CD8-positive, alpha-beta T cell (primary cell): ENCODE measurements at regions of chr20 and their contacts with region 1.

Region 1: DNA sequence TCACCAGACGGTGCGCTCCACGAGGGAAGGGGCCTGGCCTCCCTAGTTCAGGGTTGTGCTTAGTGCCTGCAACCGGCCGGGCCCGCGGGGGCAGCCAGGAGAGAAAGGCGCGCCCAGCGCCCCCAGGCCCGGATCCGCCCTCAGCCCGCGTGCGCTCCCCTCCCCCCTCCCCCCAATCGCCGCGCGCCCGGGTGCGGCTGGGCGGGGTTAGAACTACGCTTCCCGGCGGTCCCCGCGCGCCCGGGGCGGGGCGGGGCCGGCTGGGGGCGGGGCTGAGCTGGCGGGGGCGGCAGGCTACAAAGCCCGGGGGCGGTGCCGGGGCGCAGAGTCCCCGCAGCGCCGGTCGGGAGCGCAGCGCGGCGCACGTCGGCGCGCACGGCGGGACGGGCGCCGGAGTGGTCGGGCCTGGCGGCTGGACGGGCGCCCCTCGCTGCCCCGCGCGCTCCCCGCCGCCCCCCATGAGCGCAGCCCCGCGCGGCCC is at the start of gene RBM38:
- DNase-seq: peak; percentile 50 to 86 (median 74)
- ATAC-seq: peak; percentile 54
- H3K4me3 ChIP-seq: peak within 1 kb of the TSS; percentile 97 to 98
- H3K4me3 Mint-ChIP-seq: peak within 1 kb of the TSS; percentile 99
- H3K27ac ChIP-seq: peak within 1 kb of the TSS; percentile 90 to 97
- H3K27ac Mint-ChIP-seq: peak within 1 kb of the TSS; percentile 98
- H3K4me1 ChIP-seq: peaks cover 53% of the 10 kb centered on the region
- H3K4me1 Mint-ChIP-seq: peaks cover 45% of the 10 kb centered on the region
- H3K27me3 ChIP-seq: no peaks in the 10 kb centered on the region
- H3K27me3 Mint-ChIP-seq: no peaks in the 10 kb centered on the region
- CTCF ChIP-seq: no peak
- total RNA-seq, gene RBM38: 739 to 743 TPM

Region 2: GRCh38 chr20:57432874-57433491 is 41.9 kb after region 1 on chr20:
- CTCF ChIA-PET with region 1: interaction called, 58 read pairs
- POLR2A ChIA-PET with region 1: interaction called, 27 read pairs
- intact Hi-C with region 1: loop called (anchors 1 to 2 kb)
- DNase-seq: peak; percentile 27 to 87 (median 69)
- ATAC-seq: peak; percentile 86
- H3K4me3 ChIP-seq: peak overlapping the region; percentile 7 to 38
- H3K4me3 Mint-ChIP-seq: peak overlapping the region; percentile 52
- H3K27ac ChIP-seq: peak overlapping the region; percentile 2 to 68
- H3K27ac Mint-ChIP-seq: peak overlapping the region; percentile 67
- H3K4me1 ChIP-seq: peaks cover 55% of the 10 kb centered on the region
- H3K4me1 Mint-ChIP-seq: peaks cover 64% of the 10 kb centered on the region
- H3K27me3 ChIP-seq: no peaks in the 10 kb centered on the region
- H3K27me3 Mint-ChIP-seq: no peaks in the 10 kb centered on the region
- CTCF ChIP-seq: no peak

Region 3: GRCh38 chr20:57718490-57719271 is 327.6 kb after region 1 on chr20:
- CTCF ChIA-PET with region 1: no interaction called
- POLR2A ChIA-PET with region 1: no interaction called
- intact Hi-C with region 1: loop called (anchors 5 to 10 kb)
- DNase-seq: peak; percentile 78 to 96 (median 90)
- ATAC-seq: peak; percentile 97
- H3K4me3 ChIP-seq: peak overlapping the region; percentile 37 to 55
- H3K4me3 Mint-ChIP-seq: peak overlapping the region; percentile 69
- H3K27ac ChIP-seq: no peak overlapping the region
- H3K27ac Mint-ChIP-seq: peak overlapping the region; percentile 41
- H3K4me1 ChIP-seq: peaks cover 11% of the 10 kb centered on the region
- H3K4me1 Mint-ChIP-seq: peaks cover 11% of the 10 kb centered on the region
- H3K27me3 ChIP-seq: peaks cover 0 to 2% of the 10 kb centered on the region in 2 experiments
- H3K27me3 Mint-ChIP-seq: peaks cover 4% of the 10 kb centered on the region
- CTCF ChIP-seq: no peak

Region 4: DNA sequence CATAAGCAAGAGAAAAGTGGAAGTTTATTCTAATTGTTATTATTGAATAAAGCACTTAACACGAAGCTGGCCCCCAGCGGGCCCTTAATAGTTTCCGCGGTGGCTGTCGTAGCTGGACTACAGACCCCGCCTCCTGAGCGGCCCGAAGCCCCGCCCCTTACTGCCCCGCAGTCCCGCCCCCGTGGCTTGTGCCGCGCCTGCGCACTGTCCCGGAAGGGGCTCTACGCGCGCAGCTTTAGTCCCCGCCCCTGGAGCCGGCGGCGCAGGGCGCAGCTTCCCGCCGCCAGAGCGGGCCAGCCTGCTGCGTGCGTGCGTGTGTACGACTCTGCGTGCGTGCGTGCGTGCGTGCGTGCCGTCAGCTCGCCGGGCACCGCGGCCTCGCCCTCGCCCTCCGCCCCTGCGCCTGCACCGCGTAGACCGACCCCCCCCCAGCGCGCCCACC is 997.8 kb after region 1 on chr20 and contains the start of gene VAPB:
- CTCF ChIA-PET with region 1: no interaction called
- POLR2A ChIA-PET with region 1: no interaction called
- intact Hi-C with region 1: loop called in 1 of 2 experiments (anchors 5 kb)
- DNase-seq: peak; percentile 94 to 99 (median 97)
- ATAC-seq: peak; percentile 95
- H3K4me3 ChIP-seq: peak within 1 kb of the TSS; percentile 87 to 90
- H3K4me3 Mint-ChIP-seq: peak within 1 kb of the TSS; percentile 88
- H3K27ac ChIP-seq: peak within 1 kb of the TSS; percentile 98 to 99
- H3K27ac Mint-ChIP-seq: peak within 1 kb of the TSS; percentile 96
- H3K4me1 ChIP-seq: peaks cover 43% of the 10 kb centered on the region
- H3K4me1 Mint-ChIP-seq: peaks cover 40% of the 10 kb centered on the region
- H3K27me3 ChIP-seq: peaks cover 0 to 2% of the 10 kb centered on the region in 2 experiments
- H3K27me3 Mint-ChIP-seq: peaks cover 4% of the 10 kb centered on the region
- CTCF ChIP-seq: no peak
- total RNA-seq, gene VAPB: 29.3 to 32.3 TPM

Region 5: GRCh38 chr20:59159493-59160376 is 1768.6 kb after region 1 on chr20:
- CTCF ChIA-PET with region 1: no interaction called
- POLR2A ChIA-PET with region 1: no interaction called
- intact Hi-C with region 1: loop called (anchors 10 kb)
- DNase-seq: peak; percentile 56 to 97 (median 79)
- ATAC-seq: peak; percentile 86
- H3K4me3 ChIP-seq: peak overlapping the region; percentile 47 to 67
- H3K4me3 Mint-ChIP-seq: peak overlapping the region; percentile 83
- H3K27ac ChIP-seq: peak overlapping the region; percentile 79 to 93
- H3K27ac Mint-ChIP-seq: peak overlapping the region; percentile 98
- H3K4me1 ChIP-seq: peaks cover 69% of the 10 kb centered on the region
- H3K4me1 Mint-ChIP-seq: peaks cover 91% of the 10 kb centered on the region
- H3K27me3 ChIP-seq: no peaks in the 10 kb centered on the region
- H3K27me3 Mint-ChIP-seq: no peaks in the 10 kb centered on the region
- CTCF ChIP-seq: peak; percentile 23